ENCODE measurements at regions of chr10 and their contacts with region 1.

Region 1: DNA sequence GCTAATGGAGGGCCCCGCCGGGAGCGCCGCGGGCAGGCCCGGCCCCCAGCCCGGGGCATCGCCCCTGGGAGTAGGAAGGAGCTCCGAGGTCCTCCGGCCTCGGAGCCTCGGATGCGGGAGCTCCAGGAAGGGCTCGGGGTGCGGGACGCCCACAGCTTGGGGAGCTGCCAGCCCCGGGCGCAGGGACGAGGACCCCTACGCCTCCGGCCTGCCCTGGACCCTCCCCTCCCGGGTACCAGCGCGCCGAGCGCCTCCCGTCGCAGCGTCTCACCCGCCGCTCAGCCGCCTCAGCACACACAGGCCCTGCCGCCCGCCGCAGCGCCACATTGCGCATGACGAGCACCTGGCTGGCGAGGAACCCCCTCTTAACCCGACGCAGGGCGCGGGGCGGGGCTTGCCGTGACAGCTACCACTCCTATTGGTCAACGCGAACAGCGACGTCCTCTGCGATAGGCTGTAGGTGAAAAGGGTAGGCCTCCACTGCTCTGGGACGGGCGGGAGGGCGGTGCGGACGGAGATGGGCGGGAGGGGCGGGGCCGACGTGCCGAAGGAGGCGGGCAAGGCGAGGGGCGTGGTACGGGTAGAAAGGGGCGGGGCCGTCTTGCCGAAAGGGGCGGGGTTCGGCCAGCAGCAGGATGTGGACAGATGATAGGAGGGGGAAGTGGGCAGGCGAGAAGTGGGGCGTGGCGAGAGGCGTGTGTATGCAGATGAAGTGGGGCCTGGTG is at the start of gene PITRM1:
- DNase-seq: peak; percentile 98 to 99 (median 99)
- H3K4me3 ChIP-seq: peak within 1 kb of the TSS; percentile 56 to 94 (median 87)
- H3K4me3 Mint-ChIP-seq: peak within 1 kb of the TSS; percentile 87 to 95
- H3K27ac ChIP-seq: peak within 1 kb of the TSS; percentile 49 to 87
- H3K27ac Mint-ChIP-seq: peak within 1 kb of the TSS; percentile 84 to 96 (median 93)
- H3K4me1 ChIP-seq: peaks cover 18 to 25% of the 10 kb centered on the region in 2 donors
- H3K4me1 Mint-ChIP-seq: peaks cover 26% of the 10 kb centered on the region
- H3K27me3 ChIP-seq: no peaks in the 10 kb centered on the region
- H3K27me3 Mint-ChIP-seq: peaks cover 5 to 7% (median 6%) of the 10 kb centered on the region in 3 donors
- CTCF ChIP-seq: no peak
- polyA plus RNA-seq, gene PITRM1: 15.3 to 45.7 (median 23.2) TPM

Region 2: GRCh38 chr10:3095373-3096139 is 77.1 kb before region 1 on chr10:
- intact Hi-C with region 1: loop called (anchors 5 kb)
- DNase-seq: peak; percentile 89 to 94 (median 93)
- H3K4me3 ChIP-seq: peak overlapping the region; percentile 44 to 61 (median 49)
- H3K4me3 Mint-ChIP-seq: peak overlapping the region; percentile 76 to 85
- H3K27ac ChIP-seq: peak overlapping the region; percentile 80 to 93
- H3K27ac Mint-ChIP-seq: peak overlapping the region; percentile 89 to 95 (median 90)
- H3K4me1 ChIP-seq: peaks cover 51 to 75% of the 10 kb centered on the region in 2 donors
- H3K4me1 Mint-ChIP-seq: peaks cover 54% of the 10 kb centered on the region
- H3K27me3 ChIP-seq: no peaks in the 10 kb centered on the region
- H3K27me3 Mint-ChIP-seq: peaks cover 0 to 3% (median 0%) of the 10 kb centered on the region in 3 donors
- CTCF ChIP-seq: no peak

Region 3: DNA sequence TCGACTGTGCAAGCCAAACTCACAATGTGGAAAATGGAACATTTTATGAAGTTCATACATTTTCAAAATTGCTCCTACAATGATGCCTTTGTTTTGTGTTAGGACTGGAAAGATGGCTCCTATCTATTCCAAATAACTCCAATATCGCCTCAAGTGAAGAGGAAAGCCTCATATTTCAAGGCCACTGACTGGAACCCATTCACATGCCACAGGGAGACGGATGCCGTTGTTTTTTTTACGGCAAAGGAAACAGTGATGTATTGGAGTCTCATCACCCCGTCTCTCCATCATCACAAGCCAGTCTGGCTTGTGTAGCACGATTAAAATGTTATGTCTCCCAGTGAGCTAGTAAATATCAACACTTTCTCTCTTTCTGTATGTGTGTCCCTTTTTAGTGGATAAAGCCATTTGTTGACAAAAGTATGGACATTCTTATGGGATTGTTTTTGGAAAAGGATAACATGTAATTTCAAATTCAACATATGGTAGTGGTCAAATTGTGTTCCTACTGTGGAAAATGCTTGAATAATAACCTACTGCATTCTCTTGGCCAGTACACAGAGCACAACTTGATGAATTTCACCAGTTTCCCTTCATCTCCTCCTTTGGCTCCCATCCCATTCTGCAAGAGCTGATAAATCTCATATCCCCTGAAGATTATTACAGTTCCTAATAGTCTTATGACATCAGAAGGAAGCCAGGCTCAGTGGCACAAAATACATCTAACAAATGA is 109.5 kb after region 1 on chr10:
- intact Hi-C with region 1: no loop called
- DNase-seq: no peak
- H3K4me3 ChIP-seq: no peak overlapping the region
- H3K4me3 Mint-ChIP-seq: no peak overlapping the region
- H3K27ac ChIP-seq: no peak overlapping the region
- H3K27ac Mint-ChIP-seq: no peak overlapping the region
- H3K4me1 ChIP-seq: no peaks in the 10 kb centered on the region
- H3K4me1 Mint-ChIP-seq: no peaks in the 10 kb centered on the region
- H3K27me3 ChIP-seq: no peaks in the 10 kb centered on the region
- H3K27me3 Mint-ChIP-seq: peaks cover 0 to 5% (median 3%) of the 10 kb centered on the region in 3 donors
- CTCF ChIP-seq: no peak

Region 4: GRCh38 chr10:3740157-3740871 is 567.7 kb after region 1 on chr10:
- intact Hi-C with region 1: no loop called
- DNase-seq: peak; percentile 71 to 89 (median 86)
- H3K4me3 ChIP-seq: peak overlapping the region in 1 of 3 experiments; percentile 20
- H3K4me3 Mint-ChIP-seq: peak overlapping the region in 1 of 2 donors; percentile 67
- H3K27ac ChIP-seq: peak overlapping the region in 1 of 2 donors; percentile 75
- H3K27ac Mint-ChIP-seq: peak overlapping the region; percentile 73 to 94 (median 81)
- H3K4me1 ChIP-seq: peaks cover 13 to 33% of the 10 kb centered on the region in 2 donors
- H3K4me1 Mint-ChIP-seq: peaks cover 27% of the 10 kb centered on the region
- H3K27me3 ChIP-seq: no peaks in the 10 kb centered on the region
- H3K27me3 Mint-ChIP-seq: peaks cover 0 to 3% (median 1%) of the 10 kb centered on the region in 3 donors
- CTCF ChIP-seq: no peak

Measured in CD14-positive monocyte (primary cell).